Activated CD8-positive, alpha-beta T cell treated with anti-CD3 and anti-CD28 coated beads for 36 hours (primary cell): ENCODE measurements at regions of chr1 and their contacts with region 1.

Region 1: GRCh38 chr1:89884718-89885596 is 64.1 kb downstream of the LRRC8D start:
- DNase-seq: no peak
- ATAC-seq: no peak
- H3K4me3 Mint-ChIP-seq: no peak overlapping the region
- H3K27ac Mint-ChIP-seq: no peak overlapping the region
- H3K4me1 Mint-ChIP-seq: peaks cover 51% of the 10 kb centered on the region
- H3K27me3 Mint-ChIP-seq: no peaks in the 10 kb centered on the region
- CTCF ChIP-seq: no peak

Region 2: DNA sequence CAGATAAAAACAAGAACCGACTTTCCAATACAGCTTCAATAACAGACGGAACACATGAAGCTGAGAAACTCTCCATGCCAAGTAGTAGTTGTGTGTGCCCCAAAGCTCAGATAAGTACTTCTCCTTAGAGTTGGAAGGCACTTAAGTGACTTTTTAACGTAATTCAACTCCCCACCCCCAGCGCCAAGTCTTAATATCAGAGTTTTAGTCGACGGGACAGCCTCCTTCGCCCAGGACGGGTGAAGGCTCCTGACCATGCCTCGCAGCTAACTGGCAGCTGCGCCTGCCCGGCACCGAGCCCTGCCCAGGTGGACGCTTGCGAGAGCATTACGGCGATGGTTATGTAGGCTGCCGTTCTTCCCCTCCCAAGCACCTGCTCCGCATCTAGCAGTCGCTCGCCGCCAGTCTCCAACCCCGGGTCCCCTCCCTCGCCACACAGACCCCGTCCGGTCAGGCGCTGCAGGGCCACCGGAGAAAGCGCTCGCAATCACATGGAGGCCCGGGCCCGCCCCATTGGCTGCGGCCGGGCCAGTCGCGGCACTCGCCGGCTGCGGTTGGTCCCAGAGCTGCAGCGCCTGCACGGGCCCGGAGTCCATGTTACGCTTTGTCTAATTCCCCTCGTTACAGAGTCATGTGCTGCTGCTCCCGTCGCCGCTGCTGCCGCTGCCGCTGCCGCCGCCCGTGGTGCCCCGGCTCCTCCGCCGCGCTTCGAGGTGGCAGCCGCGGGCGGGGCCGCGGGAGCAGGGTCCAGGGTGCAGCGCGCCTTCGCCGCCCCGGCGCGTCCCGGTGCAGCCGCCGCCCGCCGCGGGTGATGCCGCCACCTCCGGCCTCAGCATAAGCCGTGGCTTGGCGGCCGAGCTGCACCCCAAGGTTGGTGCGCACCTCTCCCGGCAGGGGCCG is 64.3 kb before region 1 on chr1 and contains the start of gene LRRC8D:
- CTCF ChIA-PET with region 1: no interaction called
- POLR2A ChIA-PET with region 1: no interaction called
- intact Hi-C with region 1: loop called (anchors 10 kb)
- DNase-seq: peak; percentile 80
- ATAC-seq: peak; percentile 78
- H3K4me3 Mint-ChIP-seq: peak within 1 kb of the TSS; percentile 87
- H3K27ac Mint-ChIP-seq: peak within 1 kb of the TSS; percentile 88
- H3K4me1 Mint-ChIP-seq: peaks cover 43% of the 10 kb centered on the region
- H3K27me3 Mint-ChIP-seq: no peaks in the 10 kb centered on the region
- CTCF ChIP-seq: no peak
- total RNA-seq, gene LRRC8D: 26.3 to 27.5 TPM